ENCODE measurements at regions of chr16 and their contacts with region 1.

Region 1: DNA sequence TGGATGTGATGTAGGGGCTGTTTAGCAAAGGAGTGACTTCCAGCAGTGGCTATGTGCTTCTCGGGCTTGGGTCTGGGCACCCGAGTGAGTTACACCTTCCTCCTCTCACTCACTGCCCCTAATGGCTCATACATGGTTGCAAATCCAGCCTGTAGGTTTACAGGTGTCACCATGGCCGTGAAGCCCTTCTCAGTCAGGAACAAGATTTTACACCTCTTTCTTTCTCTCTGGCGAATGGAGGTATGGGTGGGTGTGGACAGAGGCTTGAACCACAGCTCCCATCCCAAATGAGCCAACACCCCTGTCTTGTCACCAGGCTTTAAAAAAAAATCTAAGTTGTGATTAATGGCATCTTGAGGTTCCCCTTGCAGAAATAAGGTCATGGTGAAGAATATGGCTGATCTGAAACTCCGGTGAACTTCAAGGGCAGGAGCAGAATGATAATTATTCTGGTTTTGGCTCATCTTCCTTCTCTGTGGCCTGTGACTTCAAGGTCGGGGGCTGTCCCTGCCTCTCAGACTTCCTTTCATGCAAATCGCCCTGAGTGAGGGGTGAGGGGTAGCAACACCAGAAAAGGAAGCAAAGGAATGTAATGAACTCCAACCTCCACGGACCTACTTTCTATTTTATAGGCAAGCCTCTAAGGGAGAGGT is 331.2 kb downstream of the MAF start:
- DNase-seq: peak; percentile 89
- H3K4me3 Mint-ChIP-seq: peak overlapping the region; percentile 60
- H3K27ac Mint-ChIP-seq: peak overlapping the region; percentile 98
- H3K4me1 Mint-ChIP-seq: peaks cover 91% of the 10 kb centered on the region
- H3K27me3 Mint-ChIP-seq: peaks cover 5% of the 10 kb centered on the region

Region 2: GRCh38 chr16:78770353-78771091 is 498.8 kb before region 1 on chr16:
- CTCF ChIA-PET with region 1: interaction called, 11 read pairs
- POLR2A ChIA-PET with region 1: interaction called, 7 read pairs
- intact Hi-C with region 1: no loop called
- DNase-seq: peak; percentile 93
- H3K4me3 Mint-ChIP-seq: peak overlapping the region; percentile 65
- H3K27ac Mint-ChIP-seq: peak overlapping the region; percentile 87
- H3K4me1 Mint-ChIP-seq: peaks cover 80% of the 10 kb centered on the region
- H3K27me3 Mint-ChIP-seq: no peaks in the 10 kb centered on the region

Region 3: GRCh38 chr16:78900044-78900811 is 369.1 kb before region 1 on chr16:
- CTCF ChIA-PET with region 1: no interaction called
- POLR2A ChIA-PET with region 1: interaction called, 3 read pairs
- intact Hi-C with region 1: loop called (anchors 1 kb)
- DNase-seq: no peak
- H3K4me3 Mint-ChIP-seq: peak overlapping the region; percentile 20
- H3K27ac Mint-ChIP-seq: peak overlapping the region; percentile 96
- H3K4me1 Mint-ChIP-seq: peaks cover 76% of the 10 kb centered on the region
- H3K27me3 Mint-ChIP-seq: no peaks in the 10 kb centered on the region

Region 4: GRCh38 chr16:79071424-79071823 is 197.9 kb before region 1 on chr16:
- CTCF ChIA-PET with region 1: interaction called, 5 read pairs
- POLR2A ChIA-PET with region 1: interaction called, 11 read pairs
- intact Hi-C with region 1: loop called (anchors 1 kb)
- DNase-seq: no peak
- H3K4me3 Mint-ChIP-seq: no peak overlapping the region
- H3K27ac Mint-ChIP-seq: peak overlapping the region; percentile 84
- H3K4me1 Mint-ChIP-seq: peaks cover 74% of the 10 kb centered on the region
- H3K27me3 Mint-ChIP-seq: peaks cover 4% of the 10 kb centered on the region

Region 5: GRCh38 chr16:79217375-79218011 is 51.8 kb before region 1 on chr16:
- CTCF ChIA-PET with region 1: interaction called, 3 read pairs
- POLR2A ChIA-PET with region 1: interaction called, 3 read pairs
- intact Hi-C with region 1: loop called (anchors 2 kb)
- DNase-seq: peak; percentile 54
- H3K4me3 Mint-ChIP-seq: peak overlapping the region; percentile 21
- H3K27ac Mint-ChIP-seq: no peak overlapping the region
- H3K4me1 Mint-ChIP-seq: peaks cover 20% of the 10 kb centered on the region
- H3K27me3 Mint-ChIP-seq: no peaks in the 10 kb centered on the region

Region 6: GRCh38 chr16:79451196-79451816 is 182.0 kb after region 1 on chr16:
- CTCF ChIA-PET with region 1: no interaction called
- POLR2A ChIA-PET with region 1: no interaction called
- intact Hi-C with region 1: loop called (anchors 5 kb)
- DNase-seq: peak; percentile 21
- H3K4me3 Mint-ChIP-seq: no peak overlapping the region
- H3K27ac Mint-ChIP-seq: peak overlapping the region; percentile 64
- H3K4me1 Mint-ChIP-seq: peaks cover 20% of the 10 kb centered on the region
- H3K27me3 Mint-ChIP-seq: no peaks in the 10 kb centered on the region

Measured in activated CD4-positive, alpha-beta memory T cell treated with anti-CD3 and anti-CD28 coated beads for 36 hours (primary cell).